ENCODE measurements at regions of chr4 and their contacts with region 1.

Region 1: DNA sequence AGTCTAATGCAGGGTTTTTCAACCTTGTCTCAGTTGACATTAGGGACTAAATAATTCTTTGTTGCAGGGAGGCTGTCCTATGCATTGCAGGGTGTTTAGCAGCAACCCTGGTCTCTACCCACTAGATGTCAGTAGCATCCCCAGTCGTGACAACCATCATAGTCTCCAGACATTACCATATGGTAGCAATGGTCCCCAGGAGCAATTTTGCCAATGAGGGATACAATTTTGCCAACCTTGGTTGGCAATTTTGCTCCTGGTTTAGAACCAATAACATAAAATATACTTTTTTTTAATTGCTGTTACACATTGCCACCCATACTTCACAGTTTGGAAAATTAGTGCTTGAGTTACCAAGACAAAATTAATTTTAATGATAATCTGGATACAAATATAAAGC is 6.0 kb downstream of the EREG start:
- DNase-seq: no peak
- ATAC-seq: peak; percentile 71
- H3K4me3 Mint-ChIP-seq: no peak overlapping the region
- H3K27ac Mint-ChIP-seq: no peak overlapping the region
- H3K4me1 Mint-ChIP-seq: no peaks in the 10 kb centered on the region
- H3K27me3 Mint-ChIP-seq: peaks cover 15% of the 10 kb centered on the region
- CTCF ChIP-seq: no peak

Region 2: DNA sequence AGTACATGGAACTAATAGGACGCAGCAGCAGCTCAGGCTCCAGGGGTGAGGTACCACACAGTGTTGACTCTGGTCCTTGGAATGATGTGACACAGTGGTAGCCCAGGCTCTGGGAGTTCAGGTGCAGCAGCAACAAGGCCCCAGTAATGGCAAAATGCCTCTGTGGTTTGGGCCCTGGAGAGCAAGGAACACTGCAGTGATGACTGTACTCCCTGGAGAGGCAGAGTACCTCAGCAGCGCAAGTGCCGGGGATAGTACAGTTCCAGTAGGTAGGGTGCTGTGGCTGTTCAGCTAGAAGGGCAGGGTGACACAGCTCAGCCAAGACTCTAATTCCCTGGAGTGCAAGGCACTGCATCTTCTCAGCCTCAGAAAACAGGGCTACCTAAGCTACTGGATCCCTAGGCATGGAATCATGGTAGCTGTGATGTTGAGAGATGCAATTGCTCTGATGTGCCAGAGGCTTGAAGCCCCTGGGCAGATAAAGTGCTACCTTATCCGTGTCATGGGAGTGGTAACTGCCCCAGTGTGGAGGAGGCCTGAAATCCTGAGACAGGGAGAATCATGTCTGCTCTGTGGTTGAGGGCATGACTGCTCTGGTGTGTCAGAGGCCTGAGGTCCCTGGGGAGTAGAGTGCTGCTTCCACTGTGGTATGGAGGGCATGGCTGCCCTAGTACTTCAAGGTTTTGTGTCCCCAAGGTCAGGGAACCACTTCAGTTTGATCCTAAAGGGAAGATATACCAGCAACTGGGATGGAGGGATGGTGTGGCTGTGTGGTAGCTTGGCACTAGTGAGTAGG is 129.3 kb after region 1 on chr4:
- CTCF ChIA-PET with region 1: no interaction called
- POLR2A ChIA-PET with region 1: no interaction called
- intact Hi-C with region 1: loop called (anchors 1 kb)
- DNase-seq: no peak
- ATAC-seq: peak; percentile 52
- H3K4me3 Mint-ChIP-seq: no peak overlapping the region
- H3K27ac Mint-ChIP-seq: no peak overlapping the region
- H3K4me1 Mint-ChIP-seq: peaks cover 5% of the 10 kb centered on the region
- H3K27me3 Mint-ChIP-seq: peaks cover 42% of the 10 kb centered on the region
- CTCF ChIP-seq: no peak

Region 3: GRCh38 chr4:75289914-75290582 is 919.1 kb after region 1 on chr4:
- CTCF ChIA-PET with region 1: no interaction called
- POLR2A ChIA-PET with region 1: no interaction called
- intact Hi-C with region 1: loop called (anchors 5 kb)
- DNase-seq: no peak
- ATAC-seq: peak; percentile 49
- H3K4me3 Mint-ChIP-seq: no peak overlapping the region
- H3K27ac Mint-ChIP-seq: no peak overlapping the region
- H3K4me1 Mint-ChIP-seq: peaks cover 8% of the 10 kb centered on the region
- H3K27me3 Mint-ChIP-seq: no peaks in the 10 kb centered on the region
- CTCF ChIP-seq: peak; percentile 25

Measured in activated B cell treated with CpG ODN at 0.5 μM for 24 hours (primary cell).